Activated CD4-positive, alpha-beta memory T cell treated with anti-CD3 and anti-CD28 coated beads for 36 hours (primary cell): ENCODE measurements at regions of chr7 and their contacts with region 1.

Region 1: GRCh38 chr7:28037220-28038010 is 143.2 kb downstream of the JAZF1 start:
- DNase-seq: peak; percentile 41
- H3K4me3 Mint-ChIP-seq: no peak overlapping the region
- H3K27ac Mint-ChIP-seq: peak overlapping the region; percentile 39
- H3K4me1 Mint-ChIP-seq: peaks cover 43% of the 10 kb centered on the region
- H3K27me3 Mint-ChIP-seq: peaks cover 15% of the 10 kb centered on the region

Region 2: GRCh38 chr7:27662490-27663205 is 374.8 kb before region 1 on chr7 and contains the start of gene HIBADH:
- CTCF ChIA-PET with region 1: no interaction called
- POLR2A ChIA-PET with region 1: no interaction called
- intact Hi-C with region 1: loop called (anchors 1 kb)
- DNase-seq: peak; percentile 96
- H3K4me3 Mint-ChIP-seq: peak within 1 kb of the TSS; percentile 76
- H3K27ac Mint-ChIP-seq: peak within 1 kb of the TSS; percentile 76
- H3K4me1 Mint-ChIP-seq: peaks cover 14% of the 10 kb centered on the region
- H3K27me3 Mint-ChIP-seq: no peaks in the 10 kb centered on the region
- total RNA-seq, gene HIBADH: 21.9 to 22.6 TPM

Region 3: GRCh38 chr7:27901028-27901760 is 136.2 kb before region 1 on chr7:
- CTCF ChIA-PET with region 1: no interaction called
- POLR2A ChIA-PET with region 1: no interaction called
- intact Hi-C with region 1: loop called (anchors 1 kb)
- DNase-seq: peak; percentile 34
- H3K4me3 Mint-ChIP-seq: no peak overlapping the region
- H3K27ac Mint-ChIP-seq: no peak overlapping the region
- H3K4me1 Mint-ChIP-seq: peaks cover 19% of the 10 kb centered on the region
- H3K27me3 Mint-ChIP-seq: no peaks in the 10 kb centered on the region

Region 4: GRCh38 chr7:28008171-28008570 is 29.2 kb before region 1 on chr7:
- CTCF ChIA-PET with region 1: no interaction called
- POLR2A ChIA-PET with region 1: no interaction called
- intact Hi-C with region 1: no loop called
- DNase-seq: no peak
- H3K4me3 Mint-ChIP-seq: no peak overlapping the region
- H3K27ac Mint-ChIP-seq: no peak overlapping the region
- H3K4me1 Mint-ChIP-seq: peaks cover 9% of the 10 kb centered on the region
- H3K27me3 Mint-ChIP-seq: no peaks in the 10 kb centered on the region

Region 5: DNA sequence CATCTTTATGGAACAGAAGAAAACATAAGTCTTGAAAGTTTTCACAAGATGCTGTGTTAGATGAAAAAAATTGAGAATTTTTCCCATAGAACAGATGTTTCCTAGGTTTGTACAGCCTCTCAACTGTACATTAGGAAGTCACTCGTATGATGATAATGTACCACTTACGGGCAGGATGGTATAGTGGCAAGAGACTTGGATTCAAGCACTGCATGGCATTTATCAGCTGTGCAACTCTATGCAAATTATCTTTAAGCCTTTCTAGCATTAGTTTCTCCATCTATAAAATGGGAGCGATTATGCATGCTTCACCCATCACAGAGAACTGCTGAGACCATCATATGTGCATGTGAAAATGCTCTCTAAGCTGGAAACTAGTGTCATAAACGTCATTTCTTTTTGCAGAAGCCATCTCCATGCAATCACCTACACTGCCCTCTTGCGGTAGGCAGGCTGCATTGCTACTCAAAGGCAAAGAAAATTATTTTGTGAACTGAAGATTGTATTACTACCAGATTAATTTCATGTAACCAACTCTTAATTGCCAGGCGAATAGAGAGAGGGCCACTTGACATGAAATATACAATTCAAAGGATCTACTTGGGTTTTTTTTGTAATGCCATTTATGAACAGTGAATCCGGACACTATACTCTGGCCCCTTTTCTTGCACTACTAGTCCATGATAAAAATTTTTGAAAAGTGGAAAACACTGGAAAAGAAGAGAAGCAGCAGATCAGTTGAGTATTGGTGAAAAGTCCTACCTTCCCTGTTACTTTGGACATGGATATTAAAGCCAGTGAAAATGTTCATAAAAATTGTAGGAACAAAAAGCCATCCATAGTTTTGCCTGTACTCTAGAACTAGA is 40.9 kb after region 1 on chr7:
- CTCF ChIA-PET with region 1: interaction called, 5 read pairs
- POLR2A ChIA-PET with region 1: no interaction called
- intact Hi-C with region 1: loop called (anchors 2 kb)
- DNase-seq: peak; percentile 60
- H3K4me3 Mint-ChIP-seq: no peak overlapping the region
- H3K27ac Mint-ChIP-seq: no peak overlapping the region
- H3K4me1 Mint-ChIP-seq: peaks cover 5% of the 10 kb centered on the region
- H3K27me3 Mint-ChIP-seq: no peaks in the 10 kb centered on the region

Region 6: DNA sequence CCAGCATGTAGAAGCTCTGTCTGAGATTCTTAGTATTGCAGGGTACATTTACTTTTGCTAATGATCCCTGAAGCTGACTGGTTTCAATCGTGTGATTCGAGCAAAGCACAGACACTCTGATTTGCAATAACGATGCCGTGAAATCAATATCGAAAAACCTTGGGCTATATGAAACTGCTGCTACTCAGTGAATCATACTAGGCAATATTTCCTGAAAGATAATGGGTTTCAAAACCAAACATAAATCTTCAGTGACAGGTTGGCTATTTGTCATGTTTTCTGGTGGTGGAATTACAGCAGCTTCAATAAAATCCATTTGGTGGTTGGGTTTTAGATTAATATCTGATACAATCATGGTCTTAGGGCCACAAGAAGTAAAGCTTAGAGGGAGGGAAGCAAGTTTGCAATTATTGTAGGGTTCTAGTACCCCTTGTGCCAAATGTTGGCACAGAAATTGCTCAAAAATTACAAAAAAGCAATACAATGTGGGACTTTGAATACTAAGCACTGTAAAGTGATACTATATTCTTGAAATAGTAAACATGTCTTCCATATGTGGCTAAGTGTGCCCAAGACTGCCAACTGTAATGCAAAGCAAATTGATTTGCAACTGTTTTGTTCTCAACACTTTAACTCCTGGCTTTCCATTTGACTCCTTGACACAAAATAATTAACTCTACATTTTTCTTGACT is 255.6 kb after region 1 on chr7:
- CTCF ChIA-PET with region 1: no interaction called
- POLR2A ChIA-PET with region 1: no interaction called
- intact Hi-C with region 1: loop called (anchors 2 kb)
- DNase-seq: peak; percentile 17
- H3K4me3 Mint-ChIP-seq: no peak overlapping the region
- H3K27ac Mint-ChIP-seq: no peak overlapping the region
- H3K4me1 Mint-ChIP-seq: peaks cover 18% of the 10 kb centered on the region
- H3K27me3 Mint-ChIP-seq: peaks cover 43% of the 10 kb centered on the region